ENCODE measurements at regions of chr7 and their contacts with region 1.

Region 1: GRCh38 chr7:32204361-32205018 is 134.3 kb upstream of the PDE1C start:
- DNase-seq: peak; percentile 19 to 56
- H3K4me3 ChIP-seq: no peak overlapping the region
- H3K27ac ChIP-seq: no peak overlapping the region
- H3K4me1 ChIP-seq: no peaks in the 10 kb centered on the region
- H3K27me3 ChIP-seq: no peaks in the 10 kb centered on the region; a peak in 1 of 7 replicates
- CTCF ChIP-seq: peak; percentile 54 to 98 (median 85)
- EP300 ChIP-seq: no peak
- POLR2A ChIP-seq: no peak
- RAD21 ChIP-seq: peak; percentile 94 to 96

Region 2: DNA sequence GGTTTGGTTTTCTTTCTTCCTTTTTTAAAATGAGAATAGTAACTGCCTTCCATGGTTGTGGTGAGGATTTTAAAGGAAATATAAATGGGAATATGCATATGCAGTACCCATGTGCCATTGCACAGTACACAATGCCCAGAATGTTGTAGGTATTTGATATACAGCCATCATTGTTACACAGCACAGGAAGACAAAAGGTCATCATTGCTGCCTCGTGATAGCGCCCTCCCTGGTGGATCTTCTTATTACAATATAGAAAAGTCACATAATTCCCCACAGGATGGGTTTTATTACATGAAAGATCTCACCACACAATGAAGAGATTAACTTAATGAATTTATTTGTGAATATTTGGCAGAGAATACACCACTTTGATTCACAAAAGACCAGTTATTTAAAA is 440.9 kb before region 1 on chr7:
- CTCF ChIA-PET with region 1: interaction called, 12 read pairs
- POLR2A ChIA-PET with region 1: no interaction called
- DNase-seq: no peak
- H3K4me3 ChIP-seq: no peak overlapping the region
- H3K27ac ChIP-seq: no peak overlapping the region
- H3K4me1 ChIP-seq: peaks cover 0 to 2% (median 0%) of the 10 kb centered on the region in 4 experiments; a peak in 2 of 7 replicates
- H3K27me3 ChIP-seq: peaks cover 48 to 93% (median 79%) of the 10 kb centered on the region in 4 experiments
- CTCF ChIP-seq: peak in 2 of 3 experiments; percentile 42 to 59; a peak in 3 of 4 replicates
- EP300 ChIP-seq: no peak
- POLR2A ChIP-seq: no peak
- RAD21 ChIP-seq: 0 out of 4 replicates have a peak, but pooled peaks of 1 of the 2 experiments have one; percentile 16

Region 3: DNA sequence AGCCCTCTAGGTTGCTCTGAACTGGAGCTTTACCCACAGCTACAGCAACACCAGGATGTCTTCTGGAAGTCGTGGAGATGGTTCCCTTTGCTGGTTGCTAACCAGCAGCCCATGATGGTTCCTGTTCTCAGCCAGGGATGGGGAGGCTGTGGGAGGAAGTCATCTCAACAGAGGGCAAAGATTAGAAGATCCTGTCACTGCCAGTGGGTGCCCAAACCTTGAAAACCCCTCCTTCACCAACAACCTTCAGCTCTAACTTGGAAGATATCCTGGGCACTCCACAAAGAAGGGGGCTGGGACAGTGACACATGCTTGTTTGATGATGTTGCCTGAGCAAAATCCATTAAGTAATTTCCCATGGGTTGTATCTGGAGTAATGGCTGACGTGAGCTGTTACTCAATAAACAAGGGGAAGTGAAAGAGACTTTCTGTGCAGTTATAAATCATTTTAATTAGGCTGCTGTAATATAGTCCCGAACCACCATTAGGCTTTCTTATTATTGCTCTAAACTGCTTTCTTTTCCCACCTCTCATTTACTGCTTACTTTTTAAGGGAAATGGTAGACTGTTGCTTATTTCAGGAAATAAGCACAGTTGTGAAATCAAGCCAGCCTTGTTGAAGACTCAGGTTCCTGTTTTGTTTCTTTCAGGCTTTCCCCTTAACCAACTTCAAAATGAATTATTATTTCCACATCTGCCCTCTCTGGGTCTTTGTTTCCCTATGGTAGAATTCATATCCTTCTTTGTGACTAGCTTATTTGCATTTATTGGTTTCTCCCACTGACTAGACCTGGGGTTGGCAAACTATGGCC is 392.6 kb before region 1 on chr7:
- CTCF ChIA-PET with region 1: interaction called, 39 read pairs
- POLR2A ChIA-PET with region 1: no interaction called
- DNase-seq: no peak
- H3K4me3 ChIP-seq: no peak overlapping the region
- H3K27ac ChIP-seq: no peak overlapping the region
- H3K4me1 ChIP-seq: no peaks in the 10 kb centered on the region
- H3K27me3 ChIP-seq: no peaks in the 10 kb centered on the region
- CTCF ChIP-seq: no peak
- EP300 ChIP-seq: no peak
- POLR2A ChIP-seq: no peak
- RAD21 ChIP-seq: no peak

Region 4: DNA sequence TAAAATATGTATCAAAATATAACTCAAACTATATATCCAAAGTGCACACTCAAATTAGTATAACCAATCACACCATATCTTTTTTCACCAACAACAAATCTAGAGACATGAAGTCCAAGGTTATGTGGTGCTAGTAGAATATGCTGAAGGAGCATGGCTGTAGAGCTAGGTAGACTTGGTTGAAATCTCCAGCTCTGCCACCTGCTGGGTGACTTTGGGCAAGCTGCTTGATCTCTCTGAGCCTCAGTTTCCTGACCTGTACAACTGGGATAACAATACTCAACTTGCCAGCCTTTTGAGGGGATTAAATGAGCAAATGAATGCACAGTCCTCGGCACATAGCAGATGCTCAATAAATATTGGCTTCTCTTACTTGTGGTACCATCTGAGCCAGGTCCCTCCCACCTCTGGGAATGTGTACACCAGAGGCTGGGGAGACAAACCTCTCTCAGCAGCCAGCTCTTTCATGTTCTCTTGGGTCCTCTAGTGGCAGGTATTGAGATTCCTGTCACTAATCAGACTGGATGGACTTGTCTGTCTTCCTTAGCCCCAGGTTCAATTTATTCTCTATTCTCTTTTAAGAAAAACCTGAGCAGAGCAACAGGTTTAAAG is 40.0 kb before region 1 on chr7:
- CTCF ChIA-PET with region 1: interaction called, 11 read pairs
- POLR2A ChIA-PET with region 1: no interaction called
- DNase-seq: peak in 1 of 2 experiments; percentile 47
- H3K4me3 ChIP-seq: no peak overlapping the region
- H3K27ac ChIP-seq: no peak overlapping the region
- H3K4me1 ChIP-seq: no peaks in the 10 kb centered on the region
- H3K27me3 ChIP-seq: no peaks in the 10 kb centered on the region
- CTCF ChIP-seq: peak; percentile 29 to 77 (median 64)
- EP300 ChIP-seq: no peak
- POLR2A ChIP-seq: no peak
- RAD21 ChIP-seq: peak; percentile 82

Region 5: DNA sequence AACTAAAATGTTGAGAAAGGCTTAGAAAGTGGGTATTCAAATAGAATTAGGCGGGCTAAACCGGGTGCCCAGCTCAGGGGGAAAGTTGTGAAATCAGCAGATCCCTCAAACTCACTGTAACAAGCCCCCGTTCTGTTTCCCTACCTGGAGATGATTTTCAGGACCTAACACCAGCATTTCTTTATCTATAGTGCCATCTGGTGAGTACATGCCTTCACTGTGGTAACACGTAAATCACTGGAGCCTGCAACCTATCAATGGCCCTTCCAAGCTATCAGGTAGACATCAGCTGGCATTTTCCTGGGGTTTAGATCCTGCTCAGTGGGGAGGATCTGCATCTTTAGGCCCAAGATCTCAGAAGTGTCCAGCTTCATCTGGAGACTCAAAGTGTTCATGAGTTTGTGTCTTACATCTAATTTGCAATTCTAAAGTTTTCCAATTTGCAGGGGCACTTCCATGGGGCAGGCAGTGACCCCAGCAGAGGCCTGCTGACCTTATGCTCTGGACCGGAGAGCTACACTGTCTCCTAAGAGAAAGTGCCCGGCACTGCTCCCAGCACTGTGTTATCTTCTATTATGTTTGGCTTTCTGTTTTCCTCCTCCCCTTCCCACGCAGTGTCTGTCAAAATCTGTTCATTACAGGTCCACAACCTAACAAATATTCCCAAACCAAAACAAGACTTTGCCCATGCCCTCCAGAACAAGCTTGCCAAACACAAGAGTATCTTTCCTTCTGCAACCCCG is 153.2 kb after region 1 on chr7:
- CTCF ChIA-PET with region 1: interaction called, 90 read pairs
- POLR2A ChIA-PET with region 1: interaction called, 4 read pairs
- DNase-seq: no peak
- H3K4me3 ChIP-seq: no peak overlapping the region
- H3K27ac ChIP-seq: no peak overlapping the region
- H3K4me1 ChIP-seq: no peaks in the 10 kb centered on the region
- H3K27me3 ChIP-seq: no peaks in the 10 kb centered on the region; a peak in 1 of 7 replicates
- CTCF ChIP-seq: peak in 2 of 3 experiments; percentile 66 to 72; a peak in 3 of 4 replicates
- EP300 ChIP-seq: no peak
- POLR2A ChIP-seq: no peak
- RAD21 ChIP-seq: peak; percentile 82 to 88